ENCODE measurements at regions of chr4 and their contacts with region 1.

Region 1: DNA sequence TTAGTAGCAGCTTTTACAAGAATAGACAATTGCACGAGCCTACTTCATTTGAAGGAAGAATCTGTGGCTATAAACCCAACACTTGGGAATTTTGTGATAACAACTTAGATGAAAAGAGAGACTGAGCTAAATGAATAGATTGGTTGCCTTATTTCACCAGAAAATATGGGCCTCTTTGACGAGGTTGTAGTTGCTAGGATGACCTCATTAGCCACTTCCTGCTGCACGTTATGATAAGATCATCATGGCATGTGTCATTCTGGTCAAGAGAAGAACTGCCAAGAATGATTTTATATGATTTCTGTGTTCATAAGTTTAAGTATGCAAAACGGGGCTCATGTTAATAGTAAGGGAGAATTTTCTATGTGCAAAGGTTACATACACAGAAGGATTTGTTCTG is 321.9 kb upstream of the GIMD1 start:
- DNase-seq: peak; percentile 86
- H3K4me3 ChIP-seq: no peak overlapping the region
- H3K27ac ChIP-seq: peak overlapping the region; percentile 79
- H3K4me1 ChIP-seq: peaks cover 18% of the 10 kb centered on the region
- H3K27me3 ChIP-seq: no peaks in the 10 kb centered on the region
- CTCF ChIP-seq: no peak
- POLR2A ChIP-seq: no peak

Region 2: GRCh38 chr4:106541253-106541652 is 149.2 kb before region 1 on chr4:
- CTCF ChIA-PET with region 1: no interaction called
- POLR2A ChIA-PET with region 1: no interaction called
- dilution Hi-C with region 1: no loop called
- intact Hi-C with region 1: loop called (anchors 2 kb)
- DNase-seq: peak; percentile 62
- H3K4me3 ChIP-seq: no peak overlapping the region
- H3K27ac ChIP-seq: peak overlapping the region; percentile 40
- H3K4me1 ChIP-seq: peaks cover 14% of the 10 kb centered on the region
- H3K27me3 ChIP-seq: no peaks in the 10 kb centered on the region
- CTCF ChIP-seq: no peak
- POLR2A ChIP-seq: no peak

Region 3: GRCh38 chr4:106583567-106583966 is 106.9 kb before region 1 on chr4:
- CTCF ChIA-PET with region 1: interaction called, 3 read pairs
- POLR2A ChIA-PET with region 1: no interaction called
- dilution Hi-C with region 1: no loop called
- intact Hi-C with region 1: loop called (anchors 1 kb)
- DNase-seq: peak; percentile 91
- H3K4me3 ChIP-seq: no peak overlapping the region
- H3K27ac ChIP-seq: peak overlapping the region; percentile 96
- H3K4me1 ChIP-seq: peaks cover 56% of the 10 kb centered on the region
- H3K27me3 ChIP-seq: no peaks in the 10 kb centered on the region
- CTCF ChIP-seq: no peak
- POLR2A ChIP-seq: no peak

Region 4: GRCh38 chr4:106809076-106809475 is 118.6 kb after region 1 on chr4:
- CTCF ChIA-PET with region 1: interaction called, 8 read pairs
- POLR2A ChIA-PET with region 1: no interaction called
- dilution Hi-C with region 1: no loop called
- intact Hi-C with region 1: loop called (anchors 5 kb)
- DNase-seq: peak; percentile 66
- H3K4me3 ChIP-seq: no peak overlapping the region
- H3K27ac ChIP-seq: no peak overlapping the region
- H3K4me1 ChIP-seq: no peaks in the 10 kb centered on the region
- H3K27me3 ChIP-seq: no peaks in the 10 kb centered on the region
- CTCF ChIP-seq: peak; percentile 27 to 30
- POLR2A ChIP-seq: no peak

Region 5: GRCh38 chr4:106898621-106899230 is 208.2 kb after region 1 on chr4:
- CTCF ChIA-PET with region 1: interaction called, 6 read pairs
- POLR2A ChIA-PET with region 1: no interaction called
- dilution Hi-C with region 1: no loop called
- intact Hi-C with region 1: loop called (anchors 5 kb)
- DNase-seq: peak; percentile 61
- H3K4me3 ChIP-seq: no peak overlapping the region
- H3K27ac ChIP-seq: no peak overlapping the region
- H3K4me1 ChIP-seq: no peaks in the 10 kb centered on the region
- H3K27me3 ChIP-seq: no peaks in the 10 kb centered on the region
- CTCF ChIP-seq: peak; percentile 65 to 69
- POLR2A ChIP-seq: no peak

Measured in endothelial cell of umbilical vein (primary cell).